ENCODE measurements at regions of chr13 and their contacts with region 1.

Region 1: GRCh38 chr13:44050450-44051063 is 170.9 kb downstream of the LACC1 start:
- DNase-seq: peak in 1 of 2 donors; percentile 13
- ATAC-seq: peak in 1 of 8 donors; percentile 20
- H3K4me3 ChIP-seq: no peak overlapping the region
- H3K27ac ChIP-seq: no peak overlapping the region
- H3K4me1 ChIP-seq: peaks cover 0 to 15% (median 2%) of the 10 kb centered on the region in 9 donors
- H3K27me3 ChIP-seq: peaks cover 0 to 6% (median 0%) of the 10 kb centered on the region in 7 donors
- CTCF ChIP-seq: peak; percentile 75 to 94 (median 86)

Region 2: DNA sequence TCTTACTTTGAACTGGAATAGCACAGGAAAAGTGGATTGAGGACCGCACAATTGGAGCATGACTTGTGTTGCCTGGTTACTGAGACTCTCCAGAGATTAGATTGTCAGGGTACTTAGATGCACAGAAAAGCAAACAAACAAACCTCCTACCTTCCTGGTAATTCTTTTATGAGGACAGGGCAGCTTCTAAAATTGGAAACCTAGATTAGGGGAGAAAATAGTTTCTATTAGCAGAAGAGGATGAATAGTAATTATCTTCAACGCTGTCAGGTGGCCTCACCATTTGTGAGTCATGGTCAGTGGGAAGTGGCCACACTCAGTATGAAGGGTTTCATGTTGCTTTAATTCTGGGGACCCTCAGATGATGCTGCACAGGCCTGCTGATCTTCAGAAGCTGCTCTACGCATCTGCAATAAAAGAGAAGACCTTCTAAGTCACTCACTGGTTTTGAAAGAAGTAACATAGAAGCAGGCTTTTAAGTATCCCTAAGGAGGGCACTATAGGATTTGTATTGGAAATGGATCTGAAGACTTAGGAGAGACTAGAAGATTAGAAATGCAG is 64.1 kb before region 1 on chr13:
- intact Hi-C with region 1: loop called in 2 of 10 experiments (anchors 2 kb)
- DNase-seq: peak in 1 of 2 donors; percentile 16
- ATAC-seq: peak; percentile 71 to 96 (median 90)
- H3K4me3 ChIP-seq: no peak overlapping the region
- H3K27ac ChIP-seq: peak overlapping the region; percentile 24 to 82 (median 73)
- H3K4me1 ChIP-seq: peaks cover 0 to 41% (median 18%) of the 10 kb centered on the region in 9 donors
- H3K27me3 ChIP-seq: no peaks in the 10 kb centered on the region
- CTCF ChIP-seq: peak in 4 of 9 donors; percentile 8 to 44 (median 26)

Region 3: DNA sequence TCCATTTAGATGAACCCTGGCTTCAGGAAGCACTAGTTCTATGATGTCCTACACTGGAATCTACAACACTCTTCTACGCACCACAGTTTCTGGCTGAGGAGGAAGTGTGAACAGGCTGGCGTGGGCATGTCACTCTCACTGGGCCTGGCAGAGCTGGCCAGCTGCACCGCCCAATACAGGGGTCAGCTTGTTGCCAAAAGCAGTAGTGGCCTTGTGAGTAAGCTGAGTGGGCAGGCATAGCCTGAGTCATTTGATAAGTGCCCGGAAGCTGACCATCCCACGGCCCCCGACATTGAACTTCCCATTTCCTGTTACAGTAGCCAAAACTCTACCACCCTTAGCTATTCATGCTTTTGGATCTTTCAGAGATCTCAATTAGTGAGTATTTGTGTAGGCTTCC is 82.2 kb after region 1 on chr13:
- intact Hi-C with region 1: loop called in 3 of 10 experiments (anchors 5 to 10 kb)
- DNase-seq: peak; percentile 71 to 79
- ATAC-seq: peak; percentile 85 to 96 (median 91)
- H3K4me3 ChIP-seq: no peak overlapping the region
- H3K27ac ChIP-seq: peak overlapping the region in 9 of 10 donors; percentile 10 to 83 (median 68)
- H3K4me1 ChIP-seq: peaks cover 0 to 25% (median 16%) of the 10 kb centered on the region in 9 donors
- H3K27me3 ChIP-seq: no peaks in the 10 kb centered on the region
- CTCF ChIP-seq: no peak

Region 4: GRCh38 chr13:44237276-44237767 is 186.8 kb after region 1 on chr13:
- intact Hi-C with region 1: loop called in 1 of 10 experiments (anchors 5 kb)
- DNase-seq: peak; percentile 32 to 90
- ATAC-seq: peak; percentile 97 to 99 (median 98)
- H3K4me3 ChIP-seq: peak overlapping the region in 1 of 10 donors; percentile 14
- H3K27ac ChIP-seq: peak overlapping the region; percentile 71 to 94 (median 88)
- H3K4me1 ChIP-seq: peaks cover 20 to 40% (median 32%) of the 10 kb centered on the region in 9 donors
- H3K27me3 ChIP-seq: no peaks in the 10 kb centered on the region
- CTCF ChIP-seq: no peak

Region 5: DNA sequence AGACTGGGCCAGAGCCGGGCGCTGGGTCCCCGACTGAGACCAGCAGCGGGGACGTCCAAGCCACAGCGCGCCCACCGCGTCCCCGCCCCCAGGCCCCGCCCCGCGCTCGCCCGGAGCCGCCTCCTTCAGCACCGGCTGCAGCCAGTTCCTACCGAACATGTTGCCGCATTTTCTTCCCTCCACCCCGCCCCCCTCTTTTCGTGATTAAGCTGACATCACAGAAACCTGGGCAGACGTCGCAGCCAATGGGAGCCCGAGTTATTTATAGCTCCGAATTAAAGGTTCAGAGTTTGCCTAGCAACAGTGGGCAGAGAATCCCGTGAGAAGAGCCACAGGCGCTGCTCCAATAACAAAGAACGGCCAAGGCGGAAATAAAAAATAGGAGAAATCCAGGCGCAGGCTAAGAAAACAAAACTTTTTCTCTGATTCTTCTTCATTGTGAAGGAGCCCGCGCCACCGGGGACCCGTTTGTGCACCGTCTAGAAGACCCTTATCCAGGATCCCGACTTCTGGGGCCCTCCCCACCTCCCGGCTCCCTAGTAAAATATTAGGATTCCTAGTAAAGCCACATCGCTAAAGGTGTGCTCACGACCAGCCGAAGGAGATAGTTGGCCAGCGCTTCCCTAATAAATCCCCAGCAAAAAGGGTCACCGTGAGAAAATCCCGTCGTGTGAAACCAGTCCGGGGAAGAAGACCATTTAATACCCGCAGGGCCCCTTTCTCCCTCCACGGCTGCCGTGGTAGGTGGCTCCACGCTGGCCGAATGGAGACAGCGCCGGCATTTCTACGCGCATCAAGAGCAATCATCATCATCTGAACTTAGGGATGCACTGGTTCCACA is 384.8 kb after region 1 on chr13:
- intact Hi-C with region 1: loop called in 9 of 10 experiments (anchors 1 to 5 kb)
- DNase-seq: peak; percentile 91 to 98
- ATAC-seq: peak; percentile 79 to 87 (median 82)
- H3K4me3 ChIP-seq: peak overlapping the region; percentile 59 to 93 (median 70)
- H3K27ac ChIP-seq: peak overlapping the region; percentile 79 to 99 (median 94)
- H3K4me1 ChIP-seq: peaks cover 0 to 42% (median 41%) of the 10 kb centered on the region in 9 donors
- H3K27me3 ChIP-seq: no peaks in the 10 kb centered on the region
- CTCF ChIP-seq: no peak

Measured in heart right ventricle (tissue), 16 donors.